Activated naive CD4-positive, alpha-beta T cell treated with anti-CD3 and anti-CD28 coated beads, Interleukin-2, amount 10 ng/mL, durations not matched to agents 7 days and 5 days (primary cell): ENCODE measurements at regions of chr10 and their contacts with region 1.

Region 1: GRCh38 chr10:73252445-73253224 is at the start of gene MRPS16:
- DNase-seq: peak; percentile 96
- H3K4me3 Mint-ChIP-seq: peak within 1 kb of the TSS; percentile 99
- H3K27ac Mint-ChIP-seq: peak within 1 kb of the TSS; percentile 93
- H3K4me1 Mint-ChIP-seq: peaks cover 57% of the 10 kb centered on the region
- H3K27me3 Mint-ChIP-seq: no peaks in the 10 kb centered on the region

Region 2: GRCh38 chr10:71945819-71946474 is 1306.7 kb before region 1 on chr10:
- CTCF ChIA-PET with region 1: no interaction called
- DNase-seq: no peak
- H3K4me3 Mint-ChIP-seq: no peak overlapping the region
- H3K27ac Mint-ChIP-seq: no peak overlapping the region
- H3K4me1 Mint-ChIP-seq: no peaks in the 10 kb centered on the region
- H3K27me3 Mint-ChIP-seq: peaks cover 10% of the 10 kb centered on the region

Region 3: DNA sequence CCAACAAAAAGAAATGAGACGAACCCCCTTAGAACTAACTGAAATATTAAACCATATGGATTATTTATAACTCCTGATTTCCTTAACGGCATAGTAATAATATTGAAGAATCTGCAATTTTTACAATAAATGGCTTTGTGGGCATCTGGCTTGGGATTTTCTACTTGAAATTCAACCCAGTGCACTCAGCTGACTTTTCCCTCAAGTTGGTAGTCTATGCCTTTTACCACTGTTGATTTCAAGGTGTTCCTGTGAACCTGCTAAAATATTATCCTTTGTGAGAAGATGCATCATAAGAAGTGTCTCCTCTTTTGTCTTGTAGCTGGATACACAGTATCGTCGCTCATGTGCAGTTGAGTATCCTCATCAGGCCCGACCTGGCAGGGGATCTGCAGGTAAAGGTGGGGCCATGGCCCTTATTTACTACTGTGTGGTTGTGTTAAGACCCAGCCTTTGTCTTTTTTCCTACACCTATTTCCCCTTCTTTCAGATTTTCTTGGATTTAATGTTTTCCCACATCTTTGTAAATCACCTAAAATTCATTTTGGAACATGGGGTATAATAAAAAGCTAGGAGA is 13.6 kb before region 1 on chr10:
- CTCF ChIA-PET with region 1: no interaction called
- DNase-seq: no peak
- H3K4me3 Mint-ChIP-seq: no peak overlapping the region
- H3K27ac Mint-ChIP-seq: no peak overlapping the region
- H3K4me1 Mint-ChIP-seq: peaks cover 22% of the 10 kb centered on the region
- H3K27me3 Mint-ChIP-seq: no peaks in the 10 kb centered on the region

Region 4: GRCh38 chr10:73263948-73264347 is 11.3 kb after region 1 on chr10:
- CTCF ChIA-PET with region 1: interaction called, 13 read pairs
- DNase-seq: no peak
- H3K4me3 Mint-ChIP-seq: no peak overlapping the region
- H3K27ac Mint-ChIP-seq: no peak overlapping the region
- H3K4me1 Mint-ChIP-seq: peaks cover 3% of the 10 kb centered on the region
- H3K27me3 Mint-ChIP-seq: no peaks in the 10 kb centered on the region